ENCODE measurements at regions of chr10 and their contacts with region 1.

Region 1: GRCh38 chr10:89414146-89414878 is at the start of gene IFIT5:
- DNase-seq: peak; percentile 36 to 86 (median 64)
- ATAC-seq: peak; percentile 74
- H3K4me3 ChIP-seq: peak within 1 kb of the TSS; percentile 89
- H3K4me3 Mint-ChIP-seq: peak within 1 kb of the TSS; percentile 96
- H3K27ac ChIP-seq: peak within 1 kb of the TSS; percentile 86 to 92
- H3K27ac Mint-ChIP-seq: peak within 1 kb of the TSS; percentile 99
- H3K4me1 ChIP-seq: peaks cover 45% of the 10 kb centered on the region
- H3K4me1 Mint-ChIP-seq: peaks cover 72% of the 10 kb centered on the region
- H3K27me3 ChIP-seq: no peaks in the 10 kb centered on the region
- H3K27me3 Mint-ChIP-seq: no peaks in the 10 kb centered on the region
- CTCF ChIP-seq: no peak
- total RNA-seq, gene IFIT5: 25.2 to 25.9 TPM

Region 2: GRCh38 chr10:88880282-88881076 is 533.8 kb before region 1 on chr10:
- CTCF ChIA-PET with region 1: no interaction called
- POLR2A ChIA-PET with region 1: interaction called, 12 read pairs
- intact Hi-C with region 1: no loop called
- DNase-seq: peak; percentile 53 to 86 (median 64)
- ATAC-seq: peak; percentile 72
- H3K4me3 ChIP-seq: peak overlapping the region; percentile 84
- H3K4me3 Mint-ChIP-seq: peak overlapping the region; percentile 99
- H3K27ac ChIP-seq: peak overlapping the region; percentile 76 to 77
- H3K27ac Mint-ChIP-seq: peak overlapping the region; percentile 91
- H3K4me1 ChIP-seq: peaks cover 25% of the 10 kb centered on the region
- H3K4me1 Mint-ChIP-seq: peaks cover 73% of the 10 kb centered on the region
- H3K27me3 ChIP-seq: no peaks in the 10 kb centered on the region
- H3K27me3 Mint-ChIP-seq: no peaks in the 10 kb centered on the region
- CTCF ChIP-seq: peak; percentile 15

Region 3: DNA sequence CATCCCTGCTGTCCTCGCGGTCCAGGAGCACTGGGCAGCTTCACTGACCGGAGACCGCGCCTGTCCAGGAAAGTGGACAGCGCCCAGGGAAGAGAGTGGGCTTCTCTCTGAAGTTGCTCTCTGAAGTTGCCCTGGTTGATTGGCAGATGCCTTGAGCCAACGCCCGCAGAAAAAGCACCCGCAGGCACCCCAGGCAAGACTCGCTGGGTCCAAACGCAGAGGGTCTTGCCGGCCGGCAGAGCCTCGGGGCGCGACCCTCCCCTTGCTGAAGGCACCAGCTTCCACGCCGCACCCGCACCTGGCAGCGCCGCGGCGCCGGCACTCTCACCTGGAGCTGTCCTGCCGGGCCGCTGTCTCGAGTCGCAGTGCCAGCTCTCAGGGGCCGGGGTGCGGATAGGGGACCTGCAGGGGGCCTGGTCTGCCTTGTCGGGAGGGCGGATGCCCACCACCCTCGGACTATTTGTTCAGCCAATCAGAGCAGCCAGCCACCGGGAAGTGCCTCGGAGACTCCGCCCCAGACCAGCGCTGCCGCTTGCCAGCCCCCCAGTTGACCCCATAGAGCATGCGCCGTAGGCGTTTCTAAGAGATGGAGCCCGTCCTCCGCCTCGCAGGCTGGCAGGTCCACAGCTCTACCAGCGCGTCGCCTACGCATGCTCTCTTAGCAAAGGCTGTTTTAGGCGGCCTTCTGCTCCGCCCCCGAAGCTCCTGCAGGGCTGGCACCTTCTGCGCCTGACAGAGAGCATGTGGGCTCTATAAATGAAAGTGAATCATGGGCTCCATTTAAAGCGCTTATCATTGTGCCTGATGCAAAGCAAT is 162.7 kb before region 1 on chr10 and contains the start of gene LIPA:
- CTCF ChIA-PET with region 1: interaction called, 4 read pairs
- POLR2A ChIA-PET with region 1: interaction called, 35 read pairs
- intact Hi-C with region 1: loop called in 1 of 2 experiments (anchors 10 kb)
- DNase-seq: peak; percentile 89 to 99 (median 94)
- ATAC-seq: peak; percentile 97
- H3K4me3 ChIP-seq: peak within 1 kb of the TSS; percentile 72
- H3K4me3 Mint-ChIP-seq: peak within 1 kb of the TSS; percentile 92
- H3K27ac ChIP-seq: peak within 1 kb of the TSS; percentile 14 to 41
- H3K27ac Mint-ChIP-seq: peak within 1 kb of the TSS; percentile 89
- H3K4me1 ChIP-seq: peaks cover 10% of the 10 kb centered on the region
- H3K4me1 Mint-ChIP-seq: peaks cover 30% of the 10 kb centered on the region
- H3K27me3 ChIP-seq: no peaks in the 10 kb centered on the region
- H3K27me3 Mint-ChIP-seq: no peaks in the 10 kb centered on the region
- CTCF ChIP-seq: no peak
- total RNA-seq, gene LIPA: 15.6 to 16.4 TPM

Region 4: GRCh38 chr10:89327784-89328441 is 86.4 kb before region 1 on chr10 and contains the start of gene IFIT3:
- CTCF ChIA-PET with region 1: no interaction called
- POLR2A ChIA-PET with region 1: no interaction called
- intact Hi-C with region 1: loop called in 1 of 2 experiments (anchors 1 kb)
- DNase-seq: peak in 5 of 14 experiments; percentile 28 to 69 (median 62)
- ATAC-seq: peak; percentile 43
- H3K4me3 ChIP-seq: peak within 1 kb of the TSS; percentile 62
- H3K4me3 Mint-ChIP-seq: peak within 1 kb of the TSS; percentile 86
- H3K27ac ChIP-seq: peak within 1 kb of the TSS; percentile 30 to 32
- H3K27ac Mint-ChIP-seq: peak within 1 kb of the TSS; percentile 63
- H3K4me1 ChIP-seq: peaks cover 45% of the 10 kb centered on the region
- H3K4me1 Mint-ChIP-seq: peaks cover 46% of the 10 kb centered on the region
- H3K27me3 ChIP-seq: no peaks in the 10 kb centered on the region
- H3K27me3 Mint-ChIP-seq: no peaks in the 10 kb centered on the region
- CTCF ChIP-seq: no peak
- total RNA-seq, gene IFIT3: 11.5 to 12.8 TPM

Region 5: DNA sequence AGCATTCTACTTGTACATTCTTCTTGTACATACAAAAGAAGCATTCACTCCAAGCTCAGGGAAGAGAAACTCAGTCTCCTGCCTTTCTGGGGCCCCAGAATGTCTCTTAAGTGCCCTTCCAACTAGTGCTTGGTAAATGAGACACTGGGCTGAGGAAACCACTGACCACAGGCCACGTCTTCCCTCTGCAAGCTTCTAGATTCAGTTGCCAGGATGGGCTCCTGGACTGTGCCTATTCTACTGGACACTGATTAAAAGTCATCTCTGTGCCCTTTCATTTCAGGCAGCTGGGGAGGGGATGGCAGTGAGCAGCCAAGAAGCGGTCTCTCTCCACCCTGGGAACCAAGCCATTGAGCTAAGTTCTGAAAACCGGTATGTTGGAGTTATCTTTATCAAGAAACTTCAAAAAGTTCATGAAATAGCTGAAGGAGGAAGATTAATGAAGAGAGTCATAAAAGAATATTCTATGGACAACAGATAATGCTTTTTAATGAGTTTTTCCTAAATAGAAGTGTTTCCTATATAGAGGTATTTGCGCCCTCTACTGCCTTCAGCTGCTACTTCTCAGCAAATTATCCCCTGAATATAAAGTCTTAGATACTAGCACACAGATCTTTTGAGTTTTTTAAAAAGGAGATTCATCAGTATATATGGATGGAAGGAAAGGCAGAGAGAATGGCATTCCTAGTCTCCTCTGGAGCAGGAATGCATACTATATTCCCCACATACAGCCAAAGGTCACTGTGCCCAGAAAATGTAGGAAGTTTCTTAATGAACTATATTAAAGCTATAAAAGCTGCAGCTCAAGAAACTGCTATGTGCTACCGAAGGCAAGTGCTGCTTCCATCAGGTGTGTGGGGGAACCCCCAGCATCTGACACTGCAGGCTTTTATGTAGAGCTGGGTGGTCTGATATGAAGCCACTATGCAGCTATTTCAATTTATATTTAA is 44.9 kb before region 1 on chr10:
- CTCF ChIA-PET with region 1: no interaction called
- POLR2A ChIA-PET with region 1: interaction called, 12 read pairs
- intact Hi-C with region 1: no loop called
- DNase-seq: peak in 5 of 14 experiments; percentile 8 to 55 (median 39)
- ATAC-seq: peak; percentile 46
- H3K4me3 ChIP-seq: no peak overlapping the region
- H3K4me3 Mint-ChIP-seq: no peak overlapping the region
- H3K27ac ChIP-seq: no peak overlapping the region
- H3K27ac Mint-ChIP-seq: no peak overlapping the region
- H3K4me1 ChIP-seq: peaks cover 7% of the 10 kb centered on the region
- H3K4me1 Mint-ChIP-seq: peaks cover 7% of the 10 kb centered on the region
- H3K27me3 ChIP-seq: no peaks in the 10 kb centered on the region
- H3K27me3 Mint-ChIP-seq: no peaks in the 10 kb centered on the region
- CTCF ChIP-seq: peak; percentile 58

Region 6: GRCh38 chr10:89403043-89403442 is 11.3 kb before region 1 on chr10:
- CTCF ChIA-PET with region 1: no interaction called
- POLR2A ChIA-PET with region 1: interaction called, 10 read pairs
- intact Hi-C with region 1: no loop called
- DNase-seq: no peak
- ATAC-seq: no peak
- H3K4me3 ChIP-seq: no peak overlapping the region
- H3K4me3 Mint-ChIP-seq: no peak overlapping the region
- H3K27ac ChIP-seq: no peak overlapping the region
- H3K27ac Mint-ChIP-seq: no peak overlapping the region
- H3K4me1 ChIP-seq: no peaks in the 10 kb centered on the region
- H3K4me1 Mint-ChIP-seq: peaks cover 27% of the 10 kb centered on the region
- H3K27me3 ChIP-seq: no peaks in the 10 kb centered on the region
- H3K27me3 Mint-ChIP-seq: no peaks in the 10 kb centered on the region
- CTCF ChIP-seq: no peak

Region 7: GRCh38 chr10:89653410-89653869 is 239.1 kb after region 1 on chr10:
- CTCF ChIA-PET with region 1: no interaction called
- POLR2A ChIA-PET with region 1: no interaction called
- intact Hi-C with region 1: no loop called
- DNase-seq: no peak
- ATAC-seq: no peak
- H3K4me3 ChIP-seq: no peak overlapping the region
- H3K4me3 Mint-ChIP-seq: no peak overlapping the region
- H3K27ac ChIP-seq: no peak overlapping the region
- H3K27ac Mint-ChIP-seq: no peak overlapping the region
- H3K4me1 ChIP-seq: no peaks in the 10 kb centered on the region
- H3K4me1 Mint-ChIP-seq: no peaks in the 10 kb centered on the region
- H3K27me3 ChIP-seq: no peaks in the 10 kb centered on the region
- H3K27me3 Mint-ChIP-seq: peaks cover 15% of the 10 kb centered on the region
- CTCF ChIP-seq: no peak

Measured in CD4-positive, alpha-beta T cell (primary cell).